GM23248 (cell line): ENCODE measurements at regions of chr7 and their contacts with region 1.

Region 1: GRCh38 chr7:135274495-135275268 is 41.0 kb downstream of the STRA8 start:
- DNase-seq: peak; percentile 69
- H3K4me3 ChIP-seq: no peak overlapping the region
- H3K27ac ChIP-seq: no peak overlapping the region
- H3K4me1 ChIP-seq: no peaks in the 10 kb centered on the region
- H3K27me3 ChIP-seq: 0 out of 2 replicates have a peak, but pooled peaks cover 2% of the 10 kb centered on the region

Region 2: GRCh38 chr7:134690016-134690415 is 584.7 kb before region 1 on chr7:
- in situ Hi-C with region 1: loop called (anchors 10 kb)
- DNase-seq: peak; percentile 83
- H3K4me3 ChIP-seq: peak overlapping the region; percentile 43
- H3K27ac ChIP-seq: peak overlapping the region; percentile 86
- H3K4me1 ChIP-seq: peaks cover 65% of the 10 kb centered on the region
- H3K27me3 ChIP-seq: no peaks in the 10 kb centered on the region

Region 3: GRCh38 chr7:135645296-135645904 is 370.7 kb after region 1 on chr7:
- in situ Hi-C with region 1: loop called (anchors 10 kb)
- DNase-seq: peak; percentile 83
- H3K4me3 ChIP-seq: no peak overlapping the region
- H3K27ac ChIP-seq: no peak overlapping the region
- H3K4me1 ChIP-seq: peaks cover 1% of the 10 kb centered on the region; the same call in 1 of the 2 replicates
- H3K27me3 ChIP-seq: no peaks in the 10 kb centered on the region